ENCODE measurements at regions of chr6 and their contacts with region 1.

Region 1: GRCh38 chr6:108558372-108559096 is 2.2 kb upstream of the FOXO3 start:
- DNase-seq: peak; percentile 99
- ATAC-seq: peak; percentile 89
- H3K4me3 ChIP-seq: peak overlapping the region; percentile 57 to 94
- H3K27ac ChIP-seq: peak overlapping the region; percentile 58 to 93
- H3K4me1 ChIP-seq: no peaks in the 10 kb centered on the region
- H3K27me3 ChIP-seq: no peaks in the 10 kb centered on the region

Region 2: DNA sequence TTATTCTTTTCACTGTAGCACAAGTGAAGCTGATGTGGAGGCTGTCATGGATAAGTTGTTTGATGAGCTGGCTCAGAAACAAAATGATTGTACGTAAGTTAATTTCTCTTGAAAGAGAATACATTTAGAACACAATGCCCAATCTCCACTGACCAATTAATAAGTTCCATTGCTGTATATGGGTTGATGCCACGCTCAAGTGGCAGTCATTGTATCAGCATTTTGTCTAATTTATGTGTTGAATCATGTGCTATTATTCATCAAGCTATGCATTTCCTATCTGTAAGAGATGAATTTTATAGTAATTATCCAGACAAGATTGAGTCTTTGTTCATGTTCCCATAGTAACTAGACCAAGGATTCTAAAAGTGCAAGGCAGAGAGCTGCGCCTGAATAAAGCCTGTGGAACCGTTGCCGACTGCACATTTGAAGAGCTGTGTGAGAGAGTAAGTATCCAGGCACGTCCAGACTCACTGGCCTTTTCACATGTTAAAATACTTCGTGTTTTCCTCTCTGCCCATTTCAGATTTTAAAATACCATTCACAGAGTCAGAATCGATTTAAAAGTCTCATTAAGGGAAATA is 81.6 kb before region 1 on chr6:
- intact Hi-C with region 1: no loop called
- DNase-seq: no peak
- ATAC-seq: no peak
- H3K4me3 ChIP-seq: no peak overlapping the region
- H3K27ac ChIP-seq: no peak overlapping the region
- H3K4me1 ChIP-seq: no peaks in the 10 kb centered on the region
- H3K27me3 ChIP-seq: no peaks in the 10 kb centered on the region

Region 3: DNA sequence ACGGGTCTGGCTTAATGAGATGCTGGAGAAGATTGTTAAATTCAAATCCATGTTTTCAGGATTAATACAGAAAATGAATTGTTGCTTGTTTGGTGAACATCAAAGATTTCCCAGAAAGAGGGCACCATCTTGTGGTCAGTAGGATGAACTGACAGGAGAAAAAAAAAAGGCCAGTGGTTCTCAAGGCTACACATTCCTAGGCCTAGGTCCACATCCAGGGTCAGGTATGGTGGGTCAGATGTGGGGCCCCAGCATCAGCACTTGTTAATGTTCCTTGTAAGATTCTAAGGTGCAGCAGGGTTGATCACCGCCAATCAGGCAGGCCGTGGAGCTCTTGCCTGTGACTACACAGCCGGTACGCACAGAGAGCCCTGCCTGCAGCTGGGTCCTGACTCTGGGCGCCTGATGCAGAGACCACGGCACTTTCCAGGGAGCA is 31.8 kb before region 1 on chr6:
- intact Hi-C with region 1: no loop called
- DNase-seq: no peak
- ATAC-seq: peak; percentile 75
- H3K4me3 ChIP-seq: no peak overlapping the region
- H3K27ac ChIP-seq: no peak overlapping the region
- H3K4me1 ChIP-seq: no peaks in the 10 kb centered on the region
- H3K27me3 ChIP-seq: no peaks in the 10 kb centered on the region

Region 4: GRCh38 chr6:108737594-108738546 is 179.3 kb after region 1 on chr6:
- intact Hi-C with region 1: loop called (anchors 2 to 5 kb)
- DNase-seq: peak; percentile 84 to 88
- ATAC-seq: peak; percentile 78
- H3K4me3 ChIP-seq: no peak overlapping the region
- H3K27ac ChIP-seq: peak overlapping the region in 1 of 2 donors; percentile 43
- H3K4me1 ChIP-seq: peaks cover 5 to 14% of the 10 kb centered on the region in 2 donors
- H3K27me3 ChIP-seq: no peaks in the 10 kb centered on the region

Region 5: GRCh38 chr6:108835218-108835850 is 276.8 kb after region 1 on chr6:
- intact Hi-C with region 1: loop called (anchors 5 kb)
- DNase-seq: peak; percentile 91 to 96
- ATAC-seq: peak; percentile 93
- H3K4me3 ChIP-seq: no peak overlapping the region
- H3K27ac ChIP-seq: peak overlapping the region in 1 of 2 donors; percentile 54
- H3K4me1 ChIP-seq: peaks cover 0 to 1% of the 10 kb centered on the region in 2 donors
- H3K27me3 ChIP-seq: no peaks in the 10 kb centered on the region

Region 6: GRCh38 chr6:108896111-108896661 is 337.7 kb after region 1 on chr6:
- intact Hi-C with region 1: loop called in 1 of 2 experiments (anchors 5 kb)
- DNase-seq: no peak
- ATAC-seq: peak; percentile 69
- H3K4me3 ChIP-seq: no peak overlapping the region
- H3K27ac ChIP-seq: peak overlapping the region; percentile 64 to 70
- H3K4me1 ChIP-seq: no peaks in the 10 kb centered on the region
- H3K27me3 ChIP-seq: no peaks in the 10 kb centered on the region

Region 7: GRCh38 chr6:109079981-109080380 is 521.4 kb after region 1 on chr6:
- intact Hi-C with region 1: loop called in 1 of 2 experiments (anchors 5 kb)
- DNase-seq: peak in 1 of 2 donors; percentile 80
- ATAC-seq: peak; percentile 87
- H3K4me3 ChIP-seq: no peak overlapping the region
- H3K27ac ChIP-seq: no peak overlapping the region
- H3K4me1 ChIP-seq: peaks cover 3 to 12% of the 10 kb centered on the region in 2 donors
- H3K27me3 ChIP-seq: no peaks in the 10 kb centered on the region